ENCODE measurements at regions of chr2 and their contacts with region 1.

Region 1: GRCh38 chr2:1550658-1551316 is 137.5 kb downstream of the TPO start:
- DNase-seq: no peak
- H3K4me3 ChIP-seq: no peak overlapping the region
- H3K27ac ChIP-seq: no peak overlapping the region
- H3K27me3 ChIP-seq: peaks cover 4% of the 10 kb centered on the region
- CTCF ChIP-seq: peak; percentile 87

Region 2: DNA sequence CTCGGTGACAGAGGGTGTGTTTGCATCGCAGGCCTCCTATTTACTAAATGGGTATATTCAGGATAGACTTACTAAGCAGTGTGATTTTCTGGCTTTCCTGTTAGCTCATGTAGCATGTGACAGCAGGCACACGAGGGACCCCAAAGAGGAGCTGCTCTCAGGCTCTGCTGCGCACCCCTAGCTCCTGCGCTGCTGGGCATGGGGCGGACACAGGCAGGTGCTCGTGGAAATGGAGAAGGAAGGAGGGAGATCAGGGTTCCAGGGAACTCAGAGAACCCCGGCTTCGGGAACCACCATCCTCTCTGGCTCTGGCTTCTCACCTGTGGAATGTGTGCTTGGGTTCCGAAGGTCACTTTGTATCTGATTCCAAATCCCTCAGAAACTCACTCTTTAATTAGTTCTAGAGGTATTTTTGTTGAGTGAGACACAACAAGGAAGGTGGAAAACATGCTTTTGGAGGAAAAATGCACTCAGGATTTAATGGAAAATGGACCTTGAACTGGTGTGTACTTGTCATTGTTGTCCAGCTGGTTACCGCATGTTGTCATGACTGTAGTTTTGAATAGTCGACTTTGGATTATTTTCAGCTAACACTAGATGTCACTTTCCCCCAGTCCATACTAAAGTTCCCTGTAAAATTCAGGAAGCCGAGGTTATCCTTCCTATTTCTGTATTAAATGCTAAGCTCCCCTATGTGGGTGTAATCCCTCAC is 596.7 kb before region 1 on chr2:
- CTCF ChIA-PET with region 1: interaction called, 26 read pairs
- POLR2A ChIA-PET with region 1: no interaction called
- DNase-seq: no peak
- H3K4me3 ChIP-seq: no peak overlapping the region
- H3K27ac ChIP-seq: no peak overlapping the region
- H3K27me3 ChIP-seq: peaks cover 26% of the 10 kb centered on the region
- CTCF ChIP-seq: peak; percentile 31; the same call in 1 of the 2 replicates

Region 3: GRCh38 chr2:1563943-1564891 is 13.4 kb after region 1 on chr2:
- CTCF ChIA-PET with region 1: interaction called, 35 read pairs
- POLR2A ChIA-PET with region 1: no interaction called
- DNase-seq: no peak
- H3K4me3 ChIP-seq: no peak overlapping the region
- H3K27ac ChIP-seq: no peak overlapping the region
- H3K27me3 ChIP-seq: peaks cover 14% of the 10 kb centered on the region
- CTCF ChIP-seq: no peak

Region 4: GRCh38 chr2:1769703-1770422 is 219.1 kb after region 1 on chr2:
- CTCF ChIA-PET with region 1: interaction called, 17 read pairs
- POLR2A ChIA-PET with region 1: no interaction called
- DNase-seq: no peak
- H3K4me3 ChIP-seq: no peak overlapping the region
- H3K27ac ChIP-seq: no peak overlapping the region
- H3K27me3 ChIP-seq: peaks cover 12% of the 10 kb centered on the region
- CTCF ChIP-seq: peak; percentile 85

Region 5: GRCh38 chr2:1817256-1818051 is 266.7 kb after region 1 on chr2:
- CTCF ChIA-PET with region 1: interaction called, 80 read pairs
- POLR2A ChIA-PET with region 1: no interaction called
- DNase-seq: peak; percentile 93
- H3K4me3 ChIP-seq: peak overlapping the region; percentile 12; the same call in 1 of the 2 replicates
- H3K27ac ChIP-seq: peak overlapping the region; percentile 93
- H3K27me3 ChIP-seq: no peaks in the 10 kb centered on the region
- CTCF ChIP-seq: peak; percentile 98